ENCODE measurements at regions of chr6 and their contacts with region 1.

Region 1: DNA sequence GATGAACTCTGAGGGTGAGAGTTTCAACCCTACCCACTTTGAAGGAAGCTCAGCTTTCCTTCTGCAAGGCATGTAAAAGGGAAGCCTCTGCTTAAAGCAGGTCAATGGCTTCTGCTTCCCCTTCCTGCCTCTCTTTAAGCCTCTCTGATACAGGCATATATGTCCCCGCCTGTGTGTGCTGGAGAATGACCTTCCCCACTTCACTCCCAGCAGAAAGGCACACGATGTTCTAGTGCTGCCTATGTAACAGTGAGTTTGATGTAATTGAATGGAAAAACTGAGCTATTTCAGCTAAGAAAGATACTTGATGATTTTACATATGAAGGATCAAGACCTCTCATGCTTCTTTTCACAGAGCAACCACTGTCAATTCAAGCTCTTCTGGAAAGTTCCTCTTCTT is 632.2 kb downstream of the HACE1 start:
- DNase-seq: no peak
- H3K4me3 ChIP-seq: no peak overlapping the region
- H3K4me3 Mint-ChIP-seq: no peak overlapping the region
- H3K27ac Mint-ChIP-seq: no peak overlapping the region
- H3K4me1 ChIP-seq: peaks cover 27% of the 10 kb centered on the region
- H3K4me1 Mint-ChIP-seq: peaks cover 14% of the 10 kb centered on the region
- H3K27me3 ChIP-seq: no peaks in the 10 kb centered on the region
- H3K27me3 Mint-ChIP-seq: no peaks in the 10 kb centered on the region
- CTCF ChIP-seq: no peak

Region 2: DNA sequence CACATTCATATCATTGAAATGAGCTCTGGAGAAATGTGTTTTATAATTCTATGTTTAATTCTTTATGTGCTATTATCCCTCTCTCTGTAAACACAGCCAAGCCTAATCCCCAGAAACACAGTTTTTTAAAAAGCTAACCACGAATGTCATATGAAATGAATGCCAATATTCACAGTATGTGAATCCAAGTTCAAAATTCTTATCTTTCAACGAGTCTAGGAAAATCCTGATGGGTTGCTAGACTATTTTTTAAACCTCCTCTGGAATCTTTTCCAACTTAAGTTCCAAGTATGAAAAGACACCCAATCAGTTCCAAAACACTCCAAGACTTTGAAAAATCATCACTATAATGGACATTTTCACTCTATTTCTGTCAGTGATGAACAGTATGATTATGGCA is 57.1 kb before region 1 on chr6:
- CTCF ChIA-PET with region 1: no interaction called
- POLR2A ChIA-PET with region 1: no interaction called
- intact Hi-C with region 1: loop called (anchors 5 kb)
- DNase-seq: no peak
- H3K4me3 ChIP-seq: no peak overlapping the region
- H3K4me3 Mint-ChIP-seq: no peak overlapping the region
- H3K27ac Mint-ChIP-seq: no peak overlapping the region
- H3K4me1 ChIP-seq: peaks cover 5% of the 10 kb centered on the region; the same call in 1 of the 2 replicates
- H3K4me1 Mint-ChIP-seq: no peaks in the 10 kb centered on the region
- H3K27me3 ChIP-seq: no peaks in the 10 kb centered on the region
- H3K27me3 Mint-ChIP-seq: no peaks in the 10 kb centered on the region
- CTCF ChIP-seq: no peak

Region 3: GRCh38 chr6:104239971-104240370 is 12.5 kb after region 1 on chr6:
- CTCF ChIA-PET with region 1: no interaction called
- POLR2A ChIA-PET with region 1: interaction called, 3 read pairs
- intact Hi-C with region 1: loop called (anchors 1 kb)
- DNase-seq: peak; percentile 69 to 72
- H3K4me3 ChIP-seq: no peak overlapping the region
- H3K4me3 Mint-ChIP-seq: no peak overlapping the region
- H3K27ac Mint-ChIP-seq: peak overlapping the region; percentile 72
- H3K4me1 ChIP-seq: peaks cover 35% of the 10 kb centered on the region
- H3K4me1 Mint-ChIP-seq: peaks cover 18% of the 10 kb centered on the region
- H3K27me3 ChIP-seq: no peaks in the 10 kb centered on the region
- H3K27me3 Mint-ChIP-seq: no peaks in the 10 kb centered on the region
- CTCF ChIP-seq: no peak

Region 4: GRCh38 chr6:104256646-104257045 is 29.1 kb after region 1 on chr6:
- CTCF ChIA-PET with region 1: no interaction called
- POLR2A ChIA-PET with region 1: no interaction called
- intact Hi-C with region 1: loop called (anchors 1 kb)
- DNase-seq: no peak
- H3K4me3 ChIP-seq: no peak overlapping the region
- H3K4me3 Mint-ChIP-seq: no peak overlapping the region
- H3K27ac Mint-ChIP-seq: no peak overlapping the region
- H3K4me1 ChIP-seq: peaks cover 42% of the 10 kb centered on the region
- H3K4me1 Mint-ChIP-seq: peaks cover 26% of the 10 kb centered on the region
- H3K27me3 ChIP-seq: no peaks in the 10 kb centered on the region
- H3K27me3 Mint-ChIP-seq: no peaks in the 10 kb centered on the region
- CTCF ChIP-seq: no peak

Region 5: GRCh38 chr6:104266922-104267321 is 39.4 kb after region 1 on chr6:
- CTCF ChIA-PET with region 1: no interaction called
- POLR2A ChIA-PET with region 1: no interaction called
- intact Hi-C with region 1: loop called (anchors 5 kb)
- DNase-seq: peak in 1 of 2 experiments; percentile 10
- H3K4me3 ChIP-seq: no peak overlapping the region
- H3K4me3 Mint-ChIP-seq: no peak overlapping the region
- H3K27ac Mint-ChIP-seq: no peak overlapping the region
- H3K4me1 ChIP-seq: peaks cover 30% of the 10 kb centered on the region
- H3K4me1 Mint-ChIP-seq: peaks cover 17% of the 10 kb centered on the region
- H3K27me3 ChIP-seq: no peaks in the 10 kb centered on the region
- H3K27me3 Mint-ChIP-seq: no peaks in the 10 kb centered on the region
- CTCF ChIP-seq: no peak

Measured in Caco-2 (cell line).